Spleen (tissue), 13 donors: ENCODE measurements at regions of chr7 and their contacts with region 1.

Region 1: GRCh38 chr7:5704534-5704922 is 76.9 kb downstream of the RNF216 start:
- DNase-seq: peak; percentile 82
- H3K4me3 ChIP-seq: no peak overlapping the region
- H3K27ac ChIP-seq: peak overlapping the region in 4 of 8 donors; percentile 6 to 73 (median 38)
- H3K4me1 ChIP-seq: peaks cover 23 to 54% (median 43%) of the 10 kb centered on the region in 6 donors
- H3K27me3 ChIP-seq: no peaks in the 10 kb centered on the region
- CTCF ChIP-seq: peak; percentile 77 to 97 (median 87)
- POLR2A ChIP-seq: no peak

Region 2: GRCh38 chr7:5494683-5495561 is 209.6 kb before region 1 on chr7:
- intact Hi-C with region 1: loop called (anchors 10 kb)
- DNase-seq: peak; percentile 94
- H3K4me3 ChIP-seq: peak overlapping the region in 7 of 8 donors; percentile 2 to 57 (median 22)
- H3K27ac ChIP-seq: peak overlapping the region in 4 of 8 donors; percentile 26 to 63 (median 34)
- H3K4me1 ChIP-seq: peaks cover 15 to 58% (median 36%) of the 10 kb centered on the region in 6 donors
- H3K27me3 ChIP-seq: no peaks in the 10 kb centered on the region
- CTCF ChIP-seq: peak; percentile 86 to 96 (median 93)
- POLR2A ChIP-seq: no peak

Region 3: GRCh38 chr7:5665094-5666025 is 39.2 kb before region 1 on chr7:
- intact Hi-C with region 1: loop called (anchors 5 kb)
- DNase-seq: no peak
- H3K4me3 ChIP-seq: no peak overlapping the region
- H3K27ac ChIP-seq: peak overlapping the region in 1 of 8 donors; percentile 1
- H3K4me1 ChIP-seq: peaks cover 15 to 82% (median 68%) of the 10 kb centered on the region in 6 donors
- H3K27me3 ChIP-seq: no peaks in the 10 kb centered on the region
- CTCF ChIP-seq: peak; percentile 65 to 93 (median 85)
- POLR2A ChIP-seq: no peak

Region 4: GRCh38 chr7:5797716-5798115 is 93.2 kb after region 1 on chr7:
- intact Hi-C with region 1: no loop called
- DNase-seq: no peak
- H3K4me3 ChIP-seq: no peak overlapping the region
- H3K27ac ChIP-seq: no peak overlapping the region
- H3K4me1 ChIP-seq: no peaks in the 10 kb centered on the region
- H3K27me3 ChIP-seq: no peaks in the 10 kb centered on the region
- CTCF ChIP-seq: no peak
- POLR2A ChIP-seq: no peak